ENCODE measurements at regions of chr1 and their contacts with region 1.

Region 1: GRCh38 chr1:234610348-234611152 is 572 bp upstream of the IRF2BP2 start:
- DNase-seq: peak; percentile 93
- H3K4me3 Mint-ChIP-seq: peak overlapping the region; percentile 87
- H3K27ac Mint-ChIP-seq: peak overlapping the region; percentile 100
- H3K4me1 Mint-ChIP-seq: peaks cover 51% of the 10 kb centered on the region
- H3K27me3 Mint-ChIP-seq: no peaks in the 10 kb centered on the region

Region 2: GRCh38 chr1:234978397-234979295 is 368.1 kb after region 1 on chr1:
- CTCF ChIA-PET with region 1: interaction called, 16 read pairs
- DNase-seq: peak; percentile 52
- H3K4me3 Mint-ChIP-seq: peak overlapping the region; percentile 4
- H3K27ac Mint-ChIP-seq: peak overlapping the region; percentile 79
- H3K4me1 Mint-ChIP-seq: peaks cover 55% of the 10 kb centered on the region
- H3K27me3 Mint-ChIP-seq: no peaks in the 10 kb centered on the region

Measured in activated naive CD4-positive, alpha-beta T cell treated with anti-CD3 and anti-CD28 coated beads, Interleukin-2, amount 10 ng/mL, durations not matched to agents 7 days and 5 days (primary cell).